ENCODE measurements at regions of chr5 and their contacts with region 1.

Region 1: GRCh38 chr5:58452566-58453258 is 7.2 kb downstream of the PLK2 start:
- DNase-seq: peak; percentile 64 to 88
- H3K4me3 ChIP-seq: peak overlapping the region; percentile 90; the same call in 1 of the 2 replicates
- H3K27ac ChIP-seq: peak overlapping the region; percentile 96
- H3K4me1 ChIP-seq: peaks cover 38% of the 10 kb centered on the region
- H3K27me3 ChIP-seq: no peaks in the 10 kb centered on the region
- CTCF ChIP-seq: no peak

Region 2: GRCh38 chr5:58235299-58235698 is 217.4 kb before region 1 on chr5:
- CTCF ChIA-PET with region 1: no interaction called
- POLR2A ChIA-PET with region 1: no interaction called
- intact Hi-C with region 1: loop called (anchors 2 kb)
- DNase-seq: peak; percentile 27 to 90
- H3K4me3 ChIP-seq: no peak overlapping the region
- H3K27ac ChIP-seq: peak overlapping the region; percentile 52
- H3K4me1 ChIP-seq: peaks cover 43% of the 10 kb centered on the region
- H3K27me3 ChIP-seq: no peaks in the 10 kb centered on the region
- CTCF ChIP-seq: no peak

Region 3: DNA sequence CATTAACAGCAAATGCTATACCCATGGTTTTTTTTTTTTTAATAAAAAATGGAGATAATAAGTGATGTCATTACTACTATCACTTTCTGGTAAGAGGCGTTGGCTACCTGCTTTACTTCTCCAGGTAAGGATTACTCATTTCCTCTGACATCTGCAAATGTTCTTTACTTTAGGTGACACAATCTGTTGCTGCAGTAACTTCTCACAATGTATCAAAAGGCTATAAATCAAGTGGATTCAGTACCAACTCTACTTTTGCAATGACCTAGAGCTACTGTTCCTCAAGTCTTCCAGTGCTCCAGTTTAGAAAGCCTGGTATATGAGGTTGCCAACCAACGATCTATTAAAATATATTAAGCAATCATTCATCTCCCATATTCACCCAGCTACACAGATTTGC is 121.9 kb before region 1 on chr5:
- CTCF ChIA-PET with region 1: no interaction called
- POLR2A ChIA-PET with region 1: no interaction called
- intact Hi-C with region 1: loop called (anchors 5 kb)
- DNase-seq: peak in 1 of 2 experiments; percentile 69
- H3K4me3 ChIP-seq: no peak overlapping the region
- H3K27ac ChIP-seq: peak overlapping the region; percentile 54
- H3K4me1 ChIP-seq: peaks cover 12% of the 10 kb centered on the region
- H3K27me3 ChIP-seq: no peaks in the 10 kb centered on the region
- CTCF ChIP-seq: no peak

Region 4: GRCh38 chr5:58383459-58383858 is 69.3 kb before region 1 on chr5:
- CTCF ChIA-PET with region 1: no interaction called
- POLR2A ChIA-PET with region 1: no interaction called
- intact Hi-C with region 1: no loop called
- DNase-seq: no peak
- H3K4me3 ChIP-seq: no peak overlapping the region
- H3K27ac ChIP-seq: no peak overlapping the region
- H3K4me1 ChIP-seq: no peaks in the 10 kb centered on the region
- H3K27me3 ChIP-seq: no peaks in the 10 kb centered on the region
- CTCF ChIP-seq: no peak

Region 5: GRCh38 chr5:58410441-58410840 is 42.3 kb before region 1 on chr5:
- CTCF ChIA-PET with region 1: no interaction called
- POLR2A ChIA-PET with region 1: no interaction called
- intact Hi-C with region 1: loop called (anchors 1 kb)
- DNase-seq: peak; percentile 18 to 81
- H3K4me3 ChIP-seq: no peak overlapping the region
- H3K27ac ChIP-seq: peak overlapping the region; percentile 87
- H3K4me1 ChIP-seq: peaks cover 59% of the 10 kb centered on the region
- H3K27me3 ChIP-seq: no peaks in the 10 kb centered on the region
- CTCF ChIP-seq: no peak